ENCODE measurements at regions of chr1 and their contacts with region 1.

Region 1: GRCh38 chr1:92536980-92537884 is 50.5 kb upstream of the GFI1 start:
- DNase-seq: peak in 3 of 9 experiments; percentile 22 to 86 (median 76)
- ATAC-seq: peak; percentile 78
- H3K4me3 ChIP-seq: peak overlapping the region in 1 of 2 experiments; percentile 9
- H3K4me3 Mint-ChIP-seq: peak overlapping the region; percentile 56
- H3K27ac ChIP-seq: peak overlapping the region; percentile 12 to 83
- H3K27ac Mint-ChIP-seq: peak overlapping the region; percentile 89
- H3K4me1 ChIP-seq: peaks cover 27% of the 10 kb centered on the region
- H3K4me1 Mint-ChIP-seq: peaks cover 60% of the 10 kb centered on the region
- H3K27me3 ChIP-seq: no peaks in the 10 kb centered on the region
- H3K27me3 Mint-ChIP-seq: no peaks in the 10 kb centered on the region
- CTCF ChIP-seq: no peak

Region 2: DNA sequence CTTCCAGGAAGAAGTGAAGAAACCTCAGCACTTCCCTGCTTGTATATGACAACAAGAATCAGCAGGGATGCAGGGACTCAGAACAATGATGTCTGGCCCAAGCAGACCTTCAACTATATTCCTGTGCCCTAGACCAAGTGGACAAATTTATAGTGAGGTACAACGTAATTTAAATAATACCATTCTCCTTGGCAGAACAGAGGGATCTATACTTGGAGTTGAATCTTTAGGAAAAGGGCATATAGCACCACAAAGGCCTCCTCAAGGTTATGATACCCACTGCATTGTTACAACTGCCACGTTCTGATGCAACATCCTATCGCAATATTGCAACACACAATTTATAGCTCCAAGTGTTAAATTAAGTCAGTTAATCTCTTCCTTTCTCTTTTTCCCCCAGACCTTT is 21.4 kb before region 1 on chr1:
- CTCF ChIA-PET with region 1: no interaction called
- POLR2A ChIA-PET with region 1: no interaction called
- intact Hi-C with region 1: no loop called
- DNase-seq: no peak
- ATAC-seq: no peak
- H3K4me3 ChIP-seq: no peak overlapping the region
- H3K4me3 Mint-ChIP-seq: no peak overlapping the region
- H3K27ac ChIP-seq: no peak overlapping the region
- H3K27ac Mint-ChIP-seq: no peak overlapping the region
- H3K4me1 ChIP-seq: no peaks in the 10 kb centered on the region
- H3K4me1 Mint-ChIP-seq: no peaks in the 10 kb centered on the region
- H3K27me3 ChIP-seq: no peaks in the 10 kb centered on the region
- H3K27me3 Mint-ChIP-seq: no peaks in the 10 kb centered on the region
- CTCF ChIP-seq: no peak

Region 3: GRCh38 chr1:92583821-92584760 is 46.9 kb after region 1 on chr1:
- CTCF ChIA-PET with region 1: no interaction called
- POLR2A ChIA-PET with region 1: interaction called, 4 read pairs
- intact Hi-C with region 1: loop called (anchors 1 to 2 kb)
- DNase-seq: peak in 2 of 9 experiments; percentile 57 to 76
- ATAC-seq: peak; percentile 92
- H3K4me3 ChIP-seq: peak overlapping the region in 1 of 2 experiments; percentile 18
- H3K4me3 Mint-ChIP-seq: peak overlapping the region; percentile 68
- H3K27ac ChIP-seq: peak overlapping the region; percentile 16 to 53
- H3K27ac Mint-ChIP-seq: peak overlapping the region; percentile 49
- H3K4me1 ChIP-seq: peaks cover 22% of the 10 kb centered on the region
- H3K4me1 Mint-ChIP-seq: peaks cover 57% of the 10 kb centered on the region
- H3K27me3 ChIP-seq: no peaks in the 10 kb centered on the region
- H3K27me3 Mint-ChIP-seq: no peaks in the 10 kb centered on the region
- CTCF ChIP-seq: no peak

Region 4: GRCh38 chr1:92749024-92749634 is 211.9 kb after region 1 on chr1:
- CTCF ChIA-PET with region 1: no interaction called
- POLR2A ChIA-PET with region 1: no interaction called
- intact Hi-C with region 1: no loop called
- DNase-seq: peak in 7 of 9 experiments; percentile 7 to 64 (median 26)
- ATAC-seq: peak; percentile 36
- H3K4me3 ChIP-seq: no peak overlapping the region
- H3K4me3 Mint-ChIP-seq: no peak overlapping the region
- H3K27ac ChIP-seq: no peak overlapping the region
- H3K27ac Mint-ChIP-seq: no peak overlapping the region
- H3K4me1 ChIP-seq: no peaks in the 10 kb centered on the region
- H3K4me1 Mint-ChIP-seq: no peaks in the 10 kb centered on the region
- H3K27me3 ChIP-seq: no peaks in the 10 kb centered on the region
- H3K27me3 Mint-ChIP-seq: no peaks in the 10 kb centered on the region
- CTCF ChIP-seq: peak; percentile 45